Adrenal gland (tissue), 19 donors: ENCODE measurements at regions of chr9 and their contacts with region 1.

Region 1: DNA sequence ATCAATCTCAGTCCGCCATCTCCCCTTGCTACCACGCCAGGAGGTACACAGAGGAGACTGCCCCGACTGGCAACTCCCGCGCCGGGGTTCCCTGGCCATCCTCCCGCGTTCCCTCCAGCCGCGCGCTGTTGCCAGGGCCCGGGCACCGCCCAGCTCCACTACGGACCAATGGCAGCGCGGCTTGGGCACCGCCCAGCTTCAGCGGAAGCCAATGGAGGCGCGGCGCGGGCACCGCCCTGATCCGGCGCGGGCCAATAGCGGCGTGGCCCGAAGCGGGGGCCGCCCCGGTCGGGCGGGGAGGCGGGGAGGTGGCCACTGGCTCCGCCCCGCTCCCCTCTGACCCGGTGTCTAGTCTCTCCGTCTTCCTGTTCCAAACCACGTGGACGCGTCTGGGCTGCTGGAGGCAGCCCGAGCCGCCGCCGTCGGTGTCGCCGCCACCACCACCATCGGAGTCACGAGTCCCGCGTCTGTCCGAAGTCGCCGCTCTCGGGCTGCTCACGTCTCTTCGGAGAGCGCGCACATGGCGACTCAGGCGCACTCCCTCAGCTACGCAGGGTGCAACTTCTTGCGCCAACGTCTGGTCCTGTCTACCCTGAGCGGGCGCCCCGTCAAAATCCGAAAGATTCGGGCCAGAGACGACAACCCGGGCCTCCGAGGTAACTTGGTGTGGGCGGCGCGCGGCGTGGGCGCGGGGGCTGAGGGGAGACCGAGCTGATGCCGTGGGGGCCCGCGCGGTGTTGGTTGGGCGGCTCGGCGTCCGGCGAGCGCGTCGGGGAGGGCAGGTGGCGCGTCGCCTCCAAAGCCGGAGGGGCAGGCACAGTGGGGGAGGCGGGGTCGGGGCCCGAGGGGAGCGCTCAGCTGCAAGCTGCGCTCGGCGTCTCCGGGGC is at the start of gene RCL1:
- DNase-seq: peak; percentile 95 to 98 (median 97)
- H3K4me3 ChIP-seq: peak within 1 kb of the TSS; percentile 81 to 98 (median 91)
- H3K27ac ChIP-seq: peak within 1 kb of the TSS; percentile 82 to 95 (median 93)
- H3K4me1 ChIP-seq: peaks cover 14 to 29% of the 10 kb centered on the region in 2 donors
- H3K27me3 ChIP-seq: no peaks in the 10 kb centered on the region
- CTCF ChIP-seq: no peak
- POLR2A ChIP-seq: peak; percentile 53 to 91
- total RNA-seq, gene RCL1: 16.9 to 33.4 (median 23.3) TPM

Region 2: DNA sequence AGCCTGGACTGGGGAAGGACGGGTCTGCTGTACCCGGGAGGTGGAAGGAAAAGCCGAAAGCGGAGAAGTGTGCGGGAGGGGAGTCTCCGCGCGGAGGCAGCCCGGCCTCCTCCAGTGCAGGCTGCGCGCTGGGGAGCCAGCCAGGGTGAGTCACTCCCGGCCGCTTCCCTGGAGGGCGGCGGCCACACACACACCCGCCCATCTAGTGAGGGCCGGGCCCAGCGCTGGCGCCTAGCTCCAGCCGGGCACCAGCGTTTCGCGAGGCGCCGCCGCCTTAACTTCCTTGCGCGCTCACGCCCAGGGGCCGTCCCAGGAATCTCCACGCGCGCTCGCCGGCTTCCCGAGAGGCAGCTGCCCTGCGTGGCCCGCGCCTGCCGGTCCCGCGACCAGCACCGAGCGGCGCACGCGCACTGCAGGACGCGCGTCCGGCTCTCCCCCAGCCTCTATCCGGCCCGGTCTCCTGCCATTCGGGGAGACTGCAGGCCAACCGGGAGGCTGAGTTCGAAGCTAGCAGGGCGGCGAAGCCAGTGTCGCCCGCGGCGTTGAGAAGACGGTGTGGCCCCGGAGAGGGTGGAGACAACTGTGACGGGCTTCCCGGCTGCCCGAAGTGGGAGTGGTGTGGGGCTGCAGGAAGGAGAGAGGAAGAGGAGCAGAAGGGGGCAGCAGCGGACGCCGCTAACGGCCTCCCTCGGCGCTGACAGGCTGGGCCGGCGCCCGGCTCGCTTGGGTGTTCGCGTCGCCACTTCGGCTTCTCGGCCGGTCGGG is 192.0 kb after region 1 on chr9 and contains the start of gene JAK2:
- intact Hi-C with region 1: loop called (anchors 10 kb)
- DNase-seq: peak; percentile 88 to 96 (median 92)
- H3K4me3 ChIP-seq: peak within 1 kb of the TSS in 3 of 4 donors; percentile 43 to 87 (median 74)
- H3K27ac ChIP-seq: peak within 1 kb of the TSS; percentile 88 to 98 (median 97)
- H3K4me1 ChIP-seq: peaks cover 21 to 43% of the 10 kb centered on the region in 2 donors
- H3K27me3 ChIP-seq: no peaks in the 10 kb centered on the region
- CTCF ChIP-seq: peak in 4 of 6 experiments; percentile 20 to 37 (median 28)
- POLR2A ChIP-seq: peak; percentile 60 to 95
- total RNA-seq, gene JAK2: 6.9 to 21.0 (median 13.5) TPM